HepG2 (cell line): ENCODE measurements at regions of chr1 and their contacts with region 1.

Region 1: DNA sequence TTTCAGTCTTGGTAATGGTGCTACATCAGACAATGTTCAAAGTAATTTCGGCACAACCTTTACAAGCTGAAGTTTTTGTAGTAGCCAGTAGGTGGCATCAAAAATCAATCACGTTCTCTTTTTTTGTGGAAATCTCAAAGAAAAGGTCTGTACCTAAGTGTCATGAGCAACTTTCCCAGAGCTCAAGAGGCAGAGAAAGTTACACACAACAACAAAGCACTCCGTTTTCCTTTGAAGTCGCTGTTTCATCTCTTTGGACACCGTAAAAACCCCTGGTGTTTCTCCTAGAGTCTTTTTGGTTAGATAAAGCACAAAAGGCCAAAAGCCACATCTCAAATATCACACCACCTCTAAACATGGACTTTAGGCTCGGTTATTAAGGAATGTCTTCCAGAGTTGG is 131.6 kb downstream of the LHX8 start:
- DNase-seq: peak; percentile 67
- ATAC-seq: peak; percentile 84
- H3K4me3 ChIP-seq: no peak overlapping the region
- H3K27ac ChIP-seq: no peak overlapping the region
- H3K4me1 ChIP-seq: peaks cover 31% of the 10 kb centered on the region
- H3K27me3 ChIP-seq: no peaks in the 10 kb centered on the region
- CTCF ChIP-seq: peak; percentile 71
- EP300 ChIP-seq: no peak; a peak in 1 of 4 replicates
- POLR2A ChIP-seq: no peak
- RAD21 ChIP-seq: peak; percentile 32; the same call in 1 of the 2 replicates

Region 2: DNA sequence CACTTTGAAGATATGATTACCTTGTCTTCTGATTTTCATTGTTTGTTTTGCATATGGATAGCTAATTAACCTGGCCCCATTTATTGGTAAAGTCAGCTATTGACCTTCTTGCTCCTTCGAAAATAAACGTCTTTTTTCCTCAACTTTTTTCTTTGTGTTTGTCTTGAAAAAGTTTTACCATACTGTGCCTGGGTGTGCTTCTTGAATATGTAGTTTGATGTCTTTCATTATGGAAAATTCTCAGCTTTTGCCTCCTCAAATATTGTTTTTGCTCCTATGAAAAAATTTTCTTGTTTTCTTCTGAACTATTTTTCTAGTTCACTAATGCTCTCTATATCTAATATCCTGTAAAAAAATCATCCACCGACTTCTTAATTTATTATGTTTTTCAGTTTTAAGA is 106.6 kb before region 1 on chr1:
- CTCF ChIA-PET with region 1: no interaction called
- POLR2A ChIA-PET with region 1: no interaction called
- in situ Hi-C with region 1: no loop called
- intact Hi-C with region 1: no loop called
- DNase-seq: no peak
- ATAC-seq: no peak
- H3K4me3 ChIP-seq: no peak overlapping the region
- H3K27ac ChIP-seq: no peak overlapping the region
- H3K4me1 ChIP-seq: no peaks in the 10 kb centered on the region
- H3K27me3 ChIP-seq: no peaks in the 10 kb centered on the region
- CTCF ChIP-seq: no peak
- EP300 ChIP-seq: no peak
- POLR2A ChIP-seq: no peak
- RAD21 ChIP-seq: no peak

Region 3: GRCh38 chr1:75220072-75220471 is 45.7 kb before region 1 on chr1:
- CTCF ChIA-PET with region 1: no interaction called
- POLR2A ChIA-PET with region 1: no interaction called
- in situ Hi-C with region 1: no loop called
- intact Hi-C with region 1: no loop called
- DNase-seq: no peak
- ATAC-seq: no peak
- H3K4me3 ChIP-seq: no peak overlapping the region
- H3K27ac ChIP-seq: no peak overlapping the region
- H3K4me1 ChIP-seq: no peaks in the 10 kb centered on the region
- H3K27me3 ChIP-seq: no peaks in the 10 kb centered on the region
- CTCF ChIP-seq: no peak
- EP300 ChIP-seq: no peak
- POLR2A ChIP-seq: no peak
- RAD21 ChIP-seq: no peak

Region 4: DNA sequence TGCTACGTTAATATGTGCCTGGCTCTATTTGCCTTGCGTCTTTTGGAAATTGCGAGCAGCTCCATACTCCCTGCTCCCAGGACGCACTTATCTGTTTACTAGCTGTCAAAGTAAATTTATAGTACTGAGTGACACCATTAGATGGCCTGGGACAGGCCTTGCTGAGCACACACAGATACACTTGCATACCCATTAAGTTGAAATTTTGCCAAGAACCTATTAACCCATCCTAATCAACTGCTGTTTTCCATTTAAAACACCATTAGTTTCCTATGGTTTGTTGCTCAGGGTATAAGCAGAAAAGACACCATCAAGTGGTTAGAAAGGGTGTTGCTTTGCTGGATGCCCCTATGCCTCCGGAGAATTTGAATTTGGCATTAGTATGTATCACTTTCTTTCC is 157.8 kb after region 1 on chr1:
- CTCF ChIA-PET with region 1: no interaction called
- POLR2A ChIA-PET with region 1: no interaction called
- in situ Hi-C with region 1: no loop called
- intact Hi-C with region 1: loop called (anchors 2 kb)
- DNase-seq: peak; percentile 2
- ATAC-seq: peak; percentile 72
- H3K4me3 ChIP-seq: no peak overlapping the region
- H3K27ac ChIP-seq: no peak overlapping the region
- H3K4me1 ChIP-seq: no peaks in the 10 kb centered on the region
- H3K27me3 ChIP-seq: no peaks in the 10 kb centered on the region
- CTCF ChIP-seq: 0 out of 2 replicates have a peak, but pooled peaks have one; percentile 8
- EP300 ChIP-seq: no peak
- POLR2A ChIP-seq: no peak
- RAD21 ChIP-seq: no peak